CD8-positive, alpha-beta memory T cell (primary cell): ENCODE measurements at regions of chr12 and their contacts with region 1.

Region 1: GRCh38 chr12:117214797-117215196 is 24.5 kb upstream of the FBXO21 start:
- DNase-seq: no peak
- H3K4me3 ChIP-seq: no peak overlapping the region
- H3K4me3 Mint-ChIP-seq: no peak overlapping the region
- H3K27ac ChIP-seq: no peak overlapping the region
- H3K27ac Mint-ChIP-seq: no peak overlapping the region
- H3K4me1 ChIP-seq: no peaks in the 10 kb centered on the region
- H3K4me1 Mint-ChIP-seq: no peaks in the 10 kb centered on the region
- H3K27me3 ChIP-seq: peaks cover 4% of the 10 kb centered on the region
- H3K27me3 Mint-ChIP-seq: peaks cover 7 to 42% of the 10 kb centered on the region in 2 donors

Region 2: DNA sequence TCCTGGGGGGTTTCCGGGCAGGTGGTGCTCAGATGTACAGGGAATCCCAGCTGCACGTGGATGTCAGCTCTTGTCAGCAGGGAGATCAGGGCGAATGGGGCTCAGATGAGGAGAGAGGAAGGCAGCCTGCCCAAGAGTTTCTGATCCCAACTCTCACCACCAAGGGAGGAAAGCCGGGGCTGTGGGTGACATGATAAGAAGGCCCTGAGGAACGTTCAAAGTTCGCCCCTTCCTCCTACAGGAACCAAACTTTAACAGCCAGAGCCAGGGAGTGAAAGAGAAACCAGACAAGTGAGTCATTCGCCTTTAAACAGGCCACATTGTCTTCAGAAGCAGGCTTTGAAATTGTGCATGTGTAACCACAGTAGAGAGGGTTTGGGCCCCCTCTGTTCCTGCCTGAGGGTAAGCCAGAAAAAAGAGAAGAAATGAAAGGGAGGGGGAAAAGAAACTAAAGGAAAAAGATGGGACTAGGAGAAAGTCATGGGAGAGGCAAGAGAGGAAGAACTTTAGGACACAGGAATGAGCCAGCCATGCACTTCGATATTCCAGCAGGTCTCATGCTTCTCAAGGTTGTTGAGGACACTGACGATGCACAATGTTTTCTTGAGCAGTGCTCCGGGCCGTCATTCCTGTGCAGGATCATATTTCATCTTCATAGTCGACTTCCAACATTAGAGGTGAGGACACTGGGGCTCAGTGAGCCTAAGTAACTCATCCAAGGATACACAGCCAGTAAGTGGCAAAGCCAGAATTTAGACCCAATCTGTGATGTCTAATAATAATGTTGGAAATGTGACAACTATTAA is 1839.4 kb before region 1 on chr12:
- CTCF ChIA-PET with region 1: no interaction called
- POLR2A ChIA-PET with region 1: no interaction called
- DNase-seq: no peak
- H3K4me3 ChIP-seq: no peak overlapping the region
- H3K4me3 Mint-ChIP-seq: peak overlapping the region in 1 of 7 donors; percentile 12
- H3K27ac ChIP-seq: no peak overlapping the region
- H3K27ac Mint-ChIP-seq: no peak overlapping the region
- H3K4me1 ChIP-seq: no peaks in the 10 kb centered on the region
- H3K4me1 Mint-ChIP-seq: peaks cover 0 to 5% (median 0%) of the 10 kb centered on the region in 3 donors
- H3K27me3 ChIP-seq: no peaks in the 10 kb centered on the region
- H3K27me3 Mint-ChIP-seq: peaks cover 0 to 1% of the 10 kb centered on the region in 2 donors

Region 3: DNA sequence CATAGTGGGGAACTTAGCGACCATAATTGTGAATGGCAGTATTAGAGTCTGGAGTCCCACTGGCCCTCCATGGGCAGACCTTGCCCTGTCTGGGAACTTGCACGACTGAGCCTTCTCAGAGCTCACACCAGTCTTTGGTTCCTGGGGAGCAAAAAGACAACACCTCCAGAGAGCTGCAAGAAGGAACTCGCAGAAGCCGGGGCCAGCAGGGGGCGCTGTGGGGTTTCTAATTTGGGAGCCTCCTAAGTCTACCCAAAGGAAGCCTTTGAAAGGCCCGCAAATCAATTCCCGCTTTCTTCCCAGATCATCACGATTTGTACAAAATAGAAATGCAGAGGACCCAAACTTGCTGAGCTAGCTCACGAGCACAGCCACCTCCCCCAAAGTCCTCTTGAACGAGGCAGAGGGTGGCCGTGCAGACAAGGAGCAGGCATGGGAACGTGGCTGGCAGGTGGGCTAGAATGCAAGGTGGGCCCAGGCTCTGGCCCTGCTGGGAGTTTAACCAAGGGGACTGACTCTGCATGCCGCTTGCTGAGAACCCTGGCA is 21.7 kb after region 1 on chr12:
- CTCF ChIA-PET with region 1: interaction called, 10 read pairs
- POLR2A ChIA-PET with region 1: no interaction called
- DNase-seq: peak; percentile 18 to 72 (median 49)
- H3K4me3 ChIP-seq: no peak overlapping the region
- H3K4me3 Mint-ChIP-seq: no peak overlapping the region
- H3K27ac ChIP-seq: no peak overlapping the region
- H3K27ac Mint-ChIP-seq: no peak overlapping the region
- H3K4me1 ChIP-seq: no peaks in the 10 kb centered on the region
- H3K4me1 Mint-ChIP-seq: peaks cover 0 to 5% (median 0%) of the 10 kb centered on the region in 3 donors
- H3K27me3 ChIP-seq: no peaks in the 10 kb centered on the region
- H3K27me3 Mint-ChIP-seq: peaks cover 8 to 29% of the 10 kb centered on the region in 2 donors

Region 4: DNA sequence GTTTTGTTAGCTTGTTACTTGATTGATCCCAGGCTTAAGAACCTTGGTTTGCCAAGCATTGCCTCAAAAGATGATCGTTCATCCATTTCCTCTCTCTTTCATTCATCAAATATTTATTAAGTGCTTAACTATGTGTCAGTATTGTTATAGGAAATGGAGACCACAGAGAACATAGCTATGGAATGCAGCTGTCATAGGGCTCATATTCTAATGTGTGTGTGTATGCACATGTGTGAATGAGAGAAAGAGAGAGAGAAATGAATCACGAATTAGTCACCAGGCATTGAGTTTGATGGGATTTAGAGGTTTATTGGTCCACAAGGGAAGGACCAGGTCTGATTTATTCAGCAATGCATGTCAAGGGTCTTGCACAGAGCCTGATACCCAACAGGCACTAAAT is 46.5 kb after region 1 on chr12:
- CTCF ChIA-PET with region 1: no interaction called
- POLR2A ChIA-PET with region 1: no interaction called
- DNase-seq: no peak
- H3K4me3 ChIP-seq: no peak overlapping the region
- H3K4me3 Mint-ChIP-seq: no peak overlapping the region
- H3K27ac ChIP-seq: no peak overlapping the region
- H3K27ac Mint-ChIP-seq: no peak overlapping the region
- H3K4me1 ChIP-seq: no peaks in the 10 kb centered on the region
- H3K4me1 Mint-ChIP-seq: no peaks in the 10 kb centered on the region
- H3K27me3 ChIP-seq: no peaks in the 10 kb centered on the region
- H3K27me3 Mint-ChIP-seq: peaks cover 4 to 7% of the 10 kb centered on the region in 2 donors